B cell (primary cell): ENCODE measurements at regions of chr2 and their contacts with region 1.

Region 1: DNA sequence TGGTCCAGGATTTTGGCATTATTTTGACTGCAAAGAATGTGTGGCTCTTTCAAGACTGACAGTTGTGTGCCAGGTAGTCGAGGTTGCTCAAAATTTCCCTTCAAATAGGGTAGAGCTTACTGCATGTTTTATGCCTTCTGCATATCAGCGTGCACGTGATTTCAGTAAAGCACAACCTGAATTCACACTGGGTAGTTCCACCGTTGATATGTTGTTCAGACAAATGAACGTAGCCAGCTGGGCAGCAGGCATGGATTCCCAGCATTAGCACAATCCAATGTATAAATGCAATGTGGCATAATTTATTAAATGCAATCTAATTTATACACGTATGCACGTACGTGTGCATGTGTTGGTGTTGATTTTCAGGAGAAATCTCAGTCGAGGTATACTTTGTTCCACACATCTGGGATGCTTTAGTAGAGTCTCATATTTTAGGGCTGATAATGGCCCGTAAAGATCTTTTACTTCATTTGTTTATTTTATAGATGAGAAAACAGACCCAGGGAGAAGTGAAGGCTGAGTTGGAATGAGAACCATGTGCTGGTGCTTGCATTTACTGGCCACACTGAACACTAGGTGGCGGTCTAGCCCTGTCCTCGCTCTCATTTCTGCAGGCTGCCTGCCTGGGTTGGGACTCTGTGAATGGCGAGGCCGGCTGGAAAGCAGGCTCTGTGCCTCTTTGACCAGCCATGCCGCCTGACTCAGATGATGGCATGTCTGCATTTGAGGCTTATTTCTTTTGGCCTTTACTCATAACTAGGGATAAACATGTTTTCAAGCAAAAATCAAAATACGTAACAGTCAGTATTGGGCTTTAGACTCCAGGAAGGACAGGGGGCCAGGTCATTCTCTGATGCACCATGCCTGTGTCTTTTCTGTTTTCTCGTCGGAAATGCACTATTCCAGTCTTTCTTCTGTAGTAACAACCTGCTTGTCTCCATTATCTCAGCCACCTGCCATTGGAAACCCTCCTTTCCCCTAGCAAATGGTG is 120.4 kb downstream of the RNF144A start:
- DNase-seq: peak; percentile 59
- ATAC-seq: peak; percentile 56
- H3K4me3 ChIP-seq: no peak overlapping the region
- H3K4me3 Mint-ChIP-seq: no peak overlapping the region
- H3K27ac ChIP-seq: no peak overlapping the region
- H3K27ac Mint-ChIP-seq: no peak overlapping the region
- H3K4me1 ChIP-seq: no peaks in the 10 kb centered on the region
- H3K4me1 Mint-ChIP-seq: peaks cover 1% of the 10 kb centered on the region
- H3K27me3 ChIP-seq: no peaks in the 10 kb centered on the region
- H3K27me3 Mint-ChIP-seq: no peaks in the 10 kb centered on the region
- CTCF ChIP-seq: peak; percentile 84

Region 2: DNA sequence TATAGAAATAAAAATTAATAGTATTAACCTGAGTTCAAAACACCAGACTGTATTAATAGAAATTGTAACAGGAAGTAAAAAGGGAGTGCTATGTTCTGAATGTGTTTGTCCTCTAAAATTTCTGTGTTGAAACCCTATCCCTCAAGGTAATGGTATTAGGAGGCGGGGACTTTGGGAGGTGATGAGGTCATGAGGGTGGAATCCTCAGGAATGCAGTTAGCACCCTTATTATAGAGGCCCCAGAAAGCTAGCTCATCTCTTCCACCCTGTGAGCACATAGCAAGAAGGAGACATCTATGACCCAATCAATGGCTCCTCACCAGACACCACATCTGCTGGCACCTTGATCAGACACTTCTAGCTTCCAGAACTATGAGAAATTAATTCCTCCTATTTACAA is 296.4 kb before region 1 on chr2:
- CTCF ChIA-PET with region 1: no interaction called
- POLR2A ChIA-PET with region 1: no interaction called
- intact Hi-C with region 1: no loop called
- DNase-seq: no peak
- ATAC-seq: no peak
- H3K4me3 ChIP-seq: no peak overlapping the region
- H3K4me3 Mint-ChIP-seq: no peak overlapping the region
- H3K27ac ChIP-seq: no peak overlapping the region
- H3K27ac Mint-ChIP-seq: no peak overlapping the region
- H3K4me1 ChIP-seq: no peaks in the 10 kb centered on the region
- H3K4me1 Mint-ChIP-seq: no peaks in the 10 kb centered on the region
- H3K27me3 ChIP-seq: no peaks in the 10 kb centered on the region
- H3K27me3 Mint-ChIP-seq: peaks cover 9% of the 10 kb centered on the region
- CTCF ChIP-seq: no peak

Region 3: GRCh38 chr2:7083577-7084509 is 46.2 kb after region 1 on chr2:
- CTCF ChIA-PET with region 1: interaction called, 3 read pairs
- POLR2A ChIA-PET with region 1: no interaction called
- intact Hi-C with region 1: loop called (anchors 1 kb)
- DNase-seq: no peak
- ATAC-seq: no peak
- H3K4me3 ChIP-seq: no peak overlapping the region
- H3K4me3 Mint-ChIP-seq: no peak overlapping the region
- H3K27ac ChIP-seq: no peak overlapping the region
- H3K27ac Mint-ChIP-seq: no peak overlapping the region
- H3K4me1 ChIP-seq: no peaks in the 10 kb centered on the region
- H3K4me1 Mint-ChIP-seq: no peaks in the 10 kb centered on the region
- H3K27me3 ChIP-seq: no peaks in the 10 kb centered on the region
- H3K27me3 Mint-ChIP-seq: peaks cover 13% of the 10 kb centered on the region
- CTCF ChIP-seq: peak; percentile 47

Region 4: GRCh38 chr2:7097348-7097895 is 59.8 kb after region 1 on chr2:
- CTCF ChIA-PET with region 1: no interaction called
- POLR2A ChIA-PET with region 1: no interaction called
- intact Hi-C with region 1: no loop called
- DNase-seq: peak; percentile 73
- ATAC-seq: peak; percentile 60
- H3K4me3 ChIP-seq: no peak overlapping the region
- H3K4me3 Mint-ChIP-seq: peak overlapping the region; percentile 38
- H3K27ac ChIP-seq: no peak overlapping the region
- H3K27ac Mint-ChIP-seq: no peak overlapping the region
- H3K4me1 ChIP-seq: peaks cover 4 to 5% of the 10 kb centered on the region in 2 donors
- H3K4me1 Mint-ChIP-seq: peaks cover 10% of the 10 kb centered on the region
- H3K27me3 ChIP-seq: peaks cover 0 to 3% (median 0%) of the 10 kb centered on the region in 4 experiments
- H3K27me3 Mint-ChIP-seq: peaks cover 22% of the 10 kb centered on the region
- CTCF ChIP-seq: peak; percentile 100

Region 5: DNA sequence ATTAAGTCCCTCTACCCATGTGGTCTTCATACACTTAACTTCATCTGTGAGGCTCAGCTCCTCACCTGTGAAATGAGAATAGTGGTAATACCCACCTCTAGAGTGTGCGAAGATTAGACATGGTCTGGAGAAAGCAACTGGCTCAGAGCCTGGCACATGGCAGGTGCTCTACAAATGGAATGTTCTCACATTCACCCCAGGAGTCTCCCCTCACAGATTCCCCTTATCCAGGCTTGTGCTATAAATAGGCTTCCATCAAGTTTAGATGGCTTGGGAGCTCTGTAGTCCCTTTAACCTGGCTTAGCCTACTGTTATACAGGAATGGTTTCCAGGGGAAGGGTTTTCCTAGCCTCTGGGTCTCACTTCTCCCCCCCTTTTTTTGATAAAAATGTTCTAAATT is 335.5 kb after region 1 on chr2:
- CTCF ChIA-PET with region 1: no interaction called
- POLR2A ChIA-PET with region 1: no interaction called
- intact Hi-C with region 1: no loop called
- DNase-seq: no peak
- ATAC-seq: no peak
- H3K4me3 ChIP-seq: no peak overlapping the region
- H3K4me3 Mint-ChIP-seq: no peak overlapping the region
- H3K27ac ChIP-seq: no peak overlapping the region
- H3K27ac Mint-ChIP-seq: no peak overlapping the region
- H3K4me1 ChIP-seq: no peaks in the 10 kb centered on the region
- H3K4me1 Mint-ChIP-seq: no peaks in the 10 kb centered on the region
- H3K27me3 ChIP-seq: peaks cover 0 to under 1% (median 0%) of the 10 kb centered on the region in 4 experiments
- H3K27me3 Mint-ChIP-seq: peaks cover 7% of the 10 kb centered on the region
- CTCF ChIP-seq: no peak

Region 6: GRCh38 chr2:7672027-7672684 is 634.5 kb after region 1 on chr2:
- CTCF ChIA-PET with region 1: no interaction called
- POLR2A ChIA-PET with region 1: no interaction called
- intact Hi-C with region 1: loop called (anchors 5 kb)
- DNase-seq: peak; percentile 23
- ATAC-seq: no peak
- H3K4me3 ChIP-seq: no peak overlapping the region
- H3K4me3 Mint-ChIP-seq: no peak overlapping the region
- H3K27ac ChIP-seq: no peak overlapping the region
- H3K27ac Mint-ChIP-seq: no peak overlapping the region
- H3K4me1 ChIP-seq: no peaks in the 10 kb centered on the region
- H3K4me1 Mint-ChIP-seq: no peaks in the 10 kb centered on the region
- H3K27me3 ChIP-seq: no peaks in the 10 kb centered on the region
- H3K27me3 Mint-ChIP-seq: peaks cover 3% of the 10 kb centered on the region
- CTCF ChIP-seq: peak; percentile 63